ENCODE measurements at regions of chr2 and their contacts with region 1.

Region 1: DNA sequence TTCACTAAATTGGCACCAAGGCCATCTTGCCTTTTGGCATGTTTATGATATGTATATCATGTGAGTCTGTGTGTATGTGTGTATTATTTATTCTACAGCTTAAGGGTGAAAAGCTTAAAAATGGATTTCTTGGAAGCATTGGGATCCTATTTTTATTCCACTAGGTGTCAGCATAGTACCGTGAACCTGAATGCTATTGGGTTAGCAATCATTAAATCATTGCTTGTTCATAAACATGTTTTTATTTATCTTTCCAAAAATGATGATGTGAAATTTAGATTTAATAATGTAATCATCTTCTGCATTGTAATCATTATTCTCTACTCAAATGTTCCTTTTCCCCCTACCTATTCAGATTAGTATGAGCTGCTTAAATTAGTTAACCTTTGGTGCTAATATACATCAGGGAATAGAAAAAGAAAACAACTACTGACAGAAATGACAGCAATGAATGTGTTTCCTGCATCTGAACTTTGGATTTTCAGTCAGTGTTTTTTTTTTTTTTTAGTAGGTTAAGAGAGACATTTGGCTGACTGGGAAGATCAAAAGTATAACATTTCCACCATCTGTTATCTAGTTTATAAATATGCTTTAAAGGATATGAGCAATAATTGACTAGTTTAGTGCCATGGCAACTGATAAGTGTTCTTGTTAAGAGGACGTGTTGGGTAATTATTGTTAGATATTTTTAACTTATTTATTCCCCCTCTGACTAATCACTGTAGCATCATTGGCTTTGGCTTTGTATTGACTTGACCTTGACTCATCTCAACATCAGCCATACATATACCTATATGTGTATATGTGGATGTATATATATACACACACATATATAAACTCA is 14.1 kb upstream of the ZSWIM2 start:
- DNase-seq: no peak
- H3K4me3 ChIP-seq: no peak overlapping the region
- H3K27ac ChIP-seq: no peak overlapping the region
- H3K4me1 ChIP-seq: no peaks in the 10 kb centered on the region
- H3K27me3 ChIP-seq: no peaks in the 10 kb centered on the region
- CTCF ChIP-seq: peak; percentile 32 to 68 (median 64)
- POLR2A ChIP-seq: no peak

Region 2: DNA sequence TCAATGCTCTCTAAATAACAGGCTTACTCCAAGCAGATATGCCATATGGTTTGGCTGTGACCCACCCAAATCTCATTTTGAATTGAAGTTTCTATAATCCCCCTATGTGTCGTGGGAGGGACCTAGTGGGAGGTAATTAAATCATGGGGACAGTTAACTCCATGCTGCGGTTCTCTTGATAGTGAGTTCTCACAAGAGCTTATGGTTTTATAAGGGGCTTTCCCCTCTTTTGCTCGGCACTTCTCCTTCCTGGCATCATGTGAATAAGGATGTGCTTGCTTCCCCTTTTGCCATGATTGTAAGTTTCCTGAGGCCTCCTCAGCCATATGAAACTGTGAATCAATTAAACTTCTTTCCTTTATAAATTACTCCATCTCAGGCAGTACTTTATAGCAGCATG is 679.7 kb before region 1 on chr2:
- intact Hi-C with region 1: no loop called
- DNase-seq: no peak
- H3K4me3 ChIP-seq: no peak overlapping the region
- H3K27ac ChIP-seq: no peak overlapping the region
- H3K4me1 ChIP-seq: no peaks in the 10 kb centered on the region
- H3K27me3 ChIP-seq: no peaks in the 10 kb centered on the region
- CTCF ChIP-seq: no peak
- POLR2A ChIP-seq: no peak

Region 3: DNA sequence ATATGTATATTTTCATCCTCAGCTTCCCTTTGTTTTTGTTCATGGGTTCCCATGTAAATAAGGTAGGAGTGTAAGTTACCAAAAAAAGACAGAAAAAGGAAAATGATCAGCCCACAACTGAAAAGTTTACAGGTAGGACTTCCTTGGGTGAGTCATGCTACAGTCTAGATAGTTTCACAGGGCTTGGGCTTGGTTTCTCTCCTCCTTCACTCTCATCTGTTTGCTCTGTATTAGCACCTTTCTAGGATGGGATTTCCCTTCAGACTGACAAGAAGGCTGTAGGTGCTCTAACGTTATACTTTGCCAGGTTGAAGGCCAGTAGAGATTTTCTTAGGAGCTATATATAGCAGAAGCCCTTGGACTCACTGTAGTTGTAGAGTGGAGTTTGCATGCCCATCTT is 111.3 kb before region 1 on chr2:
- intact Hi-C with region 1: no loop called
- DNase-seq: no peak
- H3K4me3 ChIP-seq: no peak overlapping the region
- H3K27ac ChIP-seq: no peak overlapping the region
- H3K4me1 ChIP-seq: no peaks in the 10 kb centered on the region
- H3K27me3 ChIP-seq: no peaks in the 10 kb centered on the region
- CTCF ChIP-seq: no peak
- POLR2A ChIP-seq: no peak

Region 4: GRCh38 chr2:187453078-187453641 is 590.1 kb after region 1 on chr2:
- intact Hi-C with region 1: loop called (anchors 5 kb)
- DNase-seq: no peak
- H3K4me3 ChIP-seq: no peak overlapping the region
- H3K27ac ChIP-seq: no peak overlapping the region
- H3K4me1 ChIP-seq: no peaks in the 10 kb centered on the region
- H3K27me3 ChIP-seq: no peaks in the 10 kb centered on the region
- CTCF ChIP-seq: peak in 2 of 3 experiments; percentile 47 to 56
- POLR2A ChIP-seq: no peak

Measured in vagina (tissue), 2 donors.